ENCODE measurements at regions of chr4 and their contacts with region 1.

Region 1: DNA sequence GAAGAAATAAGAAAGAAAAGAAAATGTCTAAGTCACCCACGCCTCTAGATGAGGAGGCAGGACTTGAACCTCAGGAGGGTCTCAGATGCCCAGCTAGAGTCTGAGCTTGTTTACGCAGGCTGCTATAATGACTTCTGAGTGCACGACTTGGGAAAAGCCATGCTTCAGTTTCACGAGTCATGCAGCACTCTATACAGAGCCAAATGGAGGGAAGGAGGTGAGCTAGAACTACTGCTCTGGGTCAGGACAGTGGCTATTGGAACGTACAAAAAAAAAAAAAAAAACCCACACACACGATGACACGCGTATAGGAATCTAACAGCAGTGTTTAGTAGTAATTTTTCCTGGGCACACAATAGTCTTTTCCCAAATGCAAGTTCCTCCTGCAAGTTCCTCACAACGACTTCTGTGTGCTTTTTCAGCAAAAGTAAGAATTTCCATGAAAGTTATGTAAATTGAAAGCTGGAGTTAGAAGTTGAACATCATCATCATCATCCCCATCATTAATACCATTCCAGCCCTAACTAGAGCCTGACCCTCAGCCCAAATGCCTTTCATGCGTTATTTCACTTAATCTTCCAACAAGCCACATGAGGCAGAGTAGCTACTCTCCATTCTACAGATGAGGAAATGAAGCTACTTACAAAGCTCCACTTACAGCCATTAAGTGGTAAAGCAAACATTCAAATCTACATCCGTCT is 36.6 kb downstream of the IRF2 start:
- DNase-seq: no peak
- H3K4me3 ChIP-seq: no peak overlapping the region
- H3K27ac ChIP-seq: no peak overlapping the region
- H3K4me1 ChIP-seq: peaks cover 0 to 66% (median 30%) of the 10 kb centered on the region in 4 donors
- H3K27me3 ChIP-seq: no peaks in the 10 kb centered on the region
- CTCF ChIP-seq: no peak

Region 2: DNA sequence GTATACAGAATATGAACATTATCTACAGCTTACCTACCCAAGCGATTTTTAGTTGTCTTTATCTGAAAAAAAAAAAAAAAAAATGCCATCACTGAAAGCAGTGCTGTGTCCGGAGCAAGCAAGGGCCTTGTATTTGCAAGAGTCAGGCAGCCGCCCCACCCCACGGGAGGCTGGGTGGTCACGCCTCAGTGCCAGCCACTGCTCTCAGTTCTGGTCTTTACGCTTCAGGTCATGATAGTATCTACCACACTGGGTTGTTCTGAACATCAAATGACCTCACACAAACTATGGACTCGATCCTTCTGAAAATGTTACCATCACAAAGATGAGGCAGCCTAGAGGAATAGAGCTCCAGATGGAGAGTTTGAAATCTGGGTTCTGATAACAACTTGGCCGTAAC is 517.9 kb after region 1 on chr4:
- intact Hi-C with region 1: loop called (anchors 5 kb)
- DNase-seq: no peak
- H3K4me3 ChIP-seq: no peak overlapping the region
- H3K27ac ChIP-seq: no peak overlapping the region
- H3K4me1 ChIP-seq: peaks cover 0 to 7% (median 2%) of the 10 kb centered on the region in 4 donors
- H3K27me3 ChIP-seq: no peaks in the 10 kb centered on the region
- CTCF ChIP-seq: no peak

Measured in tibial artery (tissue), 4 donors.